ENCODE measurements at regions of chr18 and their contacts with region 1.

Region 1: DNA sequence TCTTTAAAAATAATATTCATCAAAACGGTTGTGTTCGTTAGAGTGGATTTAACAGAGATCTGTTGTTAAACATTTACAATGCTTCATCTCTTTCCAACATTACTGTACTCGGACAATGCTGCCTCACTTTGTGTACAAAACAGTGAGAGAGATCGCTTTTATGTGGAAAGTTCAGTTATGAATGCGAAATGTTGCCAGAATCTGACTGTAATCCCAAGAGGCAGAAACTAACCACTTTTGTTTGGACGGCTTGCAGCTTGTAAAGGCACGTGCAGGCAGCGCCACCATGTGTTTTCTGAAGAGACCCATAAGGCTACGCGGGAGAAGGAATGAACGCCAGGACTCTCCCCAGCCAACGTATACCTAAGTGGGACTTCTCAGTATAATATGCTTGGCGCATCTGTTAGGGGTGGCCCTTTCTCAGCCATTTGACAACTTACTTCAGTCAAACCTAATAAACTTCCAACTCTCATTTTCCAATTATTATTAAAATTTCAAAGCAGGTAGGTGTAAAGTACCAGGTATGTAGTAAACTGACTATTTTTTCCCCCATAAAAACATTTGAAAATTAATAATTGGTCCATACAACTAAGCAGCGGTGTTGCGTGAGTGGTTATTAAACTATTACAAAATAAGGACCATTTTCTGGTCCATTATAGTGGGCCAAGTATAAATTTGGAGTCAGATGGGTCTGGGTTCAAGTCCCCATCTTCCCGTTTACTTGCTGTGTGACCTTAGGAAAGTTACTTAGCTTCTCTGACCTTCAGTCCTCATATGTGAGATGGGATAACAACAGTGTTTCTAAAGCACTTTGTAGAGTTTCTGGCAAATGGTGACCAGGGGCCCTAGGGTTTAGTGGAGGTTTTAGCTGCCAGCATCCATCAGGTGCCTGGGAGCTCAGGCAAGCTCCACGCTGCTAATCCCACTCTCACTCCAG is 5.6 kb upstream of the NAPG start:
- DNase-seq: peak; percentile 88 to 92 (median 91)
- H3K4me3 ChIP-seq: no peak overlapping the region
- H3K27ac ChIP-seq: no peak overlapping the region
- H3K4me1 ChIP-seq: peaks cover 0 to 24% (median 15%) of the 10 kb centered on the region in 4 experiments
- H3K27me3 ChIP-seq: no peaks in the 10 kb centered on the region

Region 2: GRCh38 chr18:9971313-9971920 is 548.9 kb before region 1 on chr18:
- CTCF ChIA-PET with region 1: interaction called, 113 read pairs
- POLR2A ChIA-PET with region 1: no interaction called
- DNase-seq: peak; percentile 81 to 92 (median 83)
- H3K4me3 ChIP-seq: no peak overlapping the region
- H3K27ac ChIP-seq: no peak overlapping the region
- H3K4me1 ChIP-seq: peaks cover 2 to 23% (median 21%) of the 10 kb centered on the region in 4 experiments
- H3K27me3 ChIP-seq: peaks cover 0 to 39% (median 2%) of the 10 kb centered on the region in 5 experiments

Region 3: GRCh38 chr18:10006311-10006893 is 513.9 kb before region 1 on chr18:
- CTCF ChIA-PET with region 1: interaction called, 14 read pairs
- POLR2A ChIA-PET with region 1: no interaction called
- DNase-seq: peak; percentile 21 to 84 (median 80)
- H3K4me3 ChIP-seq: no peak overlapping the region
- H3K27ac ChIP-seq: no peak overlapping the region
- H3K4me1 ChIP-seq: peaks cover 0 to 7% (median 0%) of the 10 kb centered on the region in 4 experiments
- H3K27me3 ChIP-seq: no peaks in the 10 kb centered on the region

Region 4: GRCh38 chr18:10430677-10431076 is 89.6 kb before region 1 on chr18:
- CTCF ChIA-PET with region 1: no interaction called
- POLR2A ChIA-PET with region 1: no interaction called
- DNase-seq: no peak
- H3K4me3 ChIP-seq: no peak overlapping the region
- H3K27ac ChIP-seq: no peak overlapping the region
- H3K4me1 ChIP-seq: no peaks in the 10 kb centered on the region
- H3K27me3 ChIP-seq: peaks cover 0 to 5% (median 2%) of the 10 kb centered on the region in 5 experiments

Region 5: DNA sequence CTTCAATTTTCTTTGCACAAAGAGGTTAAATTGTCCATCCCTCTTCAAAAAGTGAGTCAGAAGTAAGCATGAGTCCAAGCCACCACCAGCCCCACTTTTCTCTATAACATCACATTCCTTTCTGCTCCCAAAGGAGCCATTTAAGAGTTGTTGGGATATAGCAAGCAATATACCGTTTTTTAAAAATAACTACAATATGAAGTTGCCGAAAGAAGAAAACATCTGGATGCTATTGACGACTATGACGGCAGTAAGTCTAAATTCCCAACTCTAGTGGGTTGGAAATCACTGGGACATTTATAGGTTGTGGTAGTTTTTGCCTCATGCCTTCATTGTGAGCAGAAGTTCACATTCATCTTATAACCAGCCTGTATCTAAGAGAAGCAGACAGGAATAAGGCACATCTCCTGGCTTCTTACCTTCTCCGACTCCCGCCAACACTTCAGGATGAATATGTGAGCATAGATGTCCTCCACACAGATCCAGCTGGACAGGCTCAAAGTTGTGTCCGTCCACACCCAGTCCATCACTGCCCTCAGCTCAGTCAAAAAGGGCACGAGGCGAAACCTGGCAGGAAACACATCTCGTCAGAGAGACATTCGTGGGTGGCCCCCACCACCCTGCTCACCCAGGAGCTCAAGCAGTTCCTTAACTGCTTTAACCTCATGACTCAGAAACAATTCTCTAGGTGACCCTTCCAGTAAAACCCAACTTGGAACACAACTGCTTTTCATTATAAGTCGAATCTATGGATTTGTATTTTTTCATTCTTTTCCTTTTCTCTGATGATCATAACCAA is 169.2 kb after region 1 on chr18:
- CTCF ChIA-PET with region 1: no interaction called
- POLR2A ChIA-PET with region 1: no interaction called
- DNase-seq: no peak
- H3K4me3 ChIP-seq: no peak overlapping the region
- H3K27ac ChIP-seq: no peak overlapping the region
- H3K4me1 ChIP-seq: no peaks in the 10 kb centered on the region
- H3K27me3 ChIP-seq: no peaks in the 10 kb centered on the region